K562 (cell line): ENCODE measurements at regions of chr3 and their contacts with region 1.

Region 1: DNA sequence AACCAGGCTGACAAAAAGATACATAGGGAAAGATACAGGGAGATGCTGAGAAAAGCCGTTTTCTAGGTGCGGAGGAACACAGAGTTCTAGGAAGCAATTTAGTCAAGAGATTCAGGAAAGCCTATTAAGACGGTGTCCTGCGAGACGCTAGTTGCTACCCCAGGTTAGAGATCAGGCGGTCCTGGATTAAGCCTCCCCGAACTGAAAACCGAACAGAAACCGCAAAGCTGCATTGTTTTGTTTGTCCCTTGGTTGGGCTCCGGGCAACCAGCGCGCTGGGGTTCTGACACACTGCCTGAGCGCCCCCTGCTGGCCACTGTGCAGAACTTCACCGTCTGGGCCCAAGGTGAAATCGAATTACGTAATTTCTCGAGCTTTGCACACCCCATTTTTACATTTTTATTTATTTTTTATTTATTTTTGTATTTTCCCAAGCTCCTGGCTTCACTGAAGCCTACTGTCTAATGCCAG is 37.3 kb upstream of the NDUFB4 start:
- DNase-seq: peak; percentile 65 to 84 (median 74)
- ATAC-seq: peak; percentile 81
- H3K4me3 ChIP-seq: peak overlapping the region; percentile 35
- H3K27ac ChIP-seq: peak overlapping the region; percentile 71; the same call in 2 of the 3 replicates
- H3K4me1 ChIP-seq: peaks cover 0 to 7% of the 10 kb centered on the region in 2 experiments; a peak in 3 of 5 replicates
- H3K27me3 ChIP-seq: no peaks in the 10 kb centered on the region; a peak in 1 of 5 replicates
- CTCF ChIP-seq: peak; percentile 78 to 87 (median 86)
- EP300 ChIP-seq: no peak
- POLR2A ChIP-seq: no peak
- RAD21 ChIP-seq: peak; percentile 79 to 82

Region 2: GRCh38 chr3:120239644-120240043 is 319.2 kb before region 1 on chr3:
- CTCF ChIA-PET with region 1: interaction called, 8 read pairs
- POLR2A ChIA-PET with region 1: no interaction called
- in situ Hi-C with region 1: loop called (anchors 5 kb)
- intact Hi-C with region 1: loop called (anchors 1 kb)
- DNase-seq: no peak
- ATAC-seq: no peak
- H3K4me3 ChIP-seq: no peak overlapping the region
- H3K27ac ChIP-seq: no peak overlapping the region
- H3K4me1 ChIP-seq: no peaks in the 10 kb centered on the region
- H3K27me3 ChIP-seq: peaks cover 0 to 4% of the 10 kb centered on the region in 2 experiments; a peak in 1 of 5 replicates
- CTCF ChIP-seq: no peak
- EP300 ChIP-seq: no peak
- POLR2A ChIP-seq: no peak
- RAD21 ChIP-seq: no peak

Region 3: GRCh38 chr3:120417272-120417911 is 141.4 kb before region 1 on chr3:
- CTCF ChIA-PET with region 1: interaction called, 4 read pairs
- POLR2A ChIA-PET with region 1: interaction called, 3 read pairs
- in situ Hi-C with region 1: no loop called
- intact Hi-C with region 1: loop called (anchors 1 kb)
- DNase-seq: peak; percentile 81 to 87 (median 85)
- ATAC-seq: peak; percentile 99
- H3K4me3 ChIP-seq: no peak overlapping the region
- H3K27ac ChIP-seq: no peak overlapping the region
- H3K4me1 ChIP-seq: no peaks in the 10 kb centered on the region
- H3K27me3 ChIP-seq: no peaks in the 10 kb centered on the region
- CTCF ChIP-seq: peak; percentile 56 to 81 (median 79)
- EP300 ChIP-seq: no peak
- POLR2A ChIP-seq: no peak
- RAD21 ChIP-seq: peak; percentile 69 to 78

Region 4: DNA sequence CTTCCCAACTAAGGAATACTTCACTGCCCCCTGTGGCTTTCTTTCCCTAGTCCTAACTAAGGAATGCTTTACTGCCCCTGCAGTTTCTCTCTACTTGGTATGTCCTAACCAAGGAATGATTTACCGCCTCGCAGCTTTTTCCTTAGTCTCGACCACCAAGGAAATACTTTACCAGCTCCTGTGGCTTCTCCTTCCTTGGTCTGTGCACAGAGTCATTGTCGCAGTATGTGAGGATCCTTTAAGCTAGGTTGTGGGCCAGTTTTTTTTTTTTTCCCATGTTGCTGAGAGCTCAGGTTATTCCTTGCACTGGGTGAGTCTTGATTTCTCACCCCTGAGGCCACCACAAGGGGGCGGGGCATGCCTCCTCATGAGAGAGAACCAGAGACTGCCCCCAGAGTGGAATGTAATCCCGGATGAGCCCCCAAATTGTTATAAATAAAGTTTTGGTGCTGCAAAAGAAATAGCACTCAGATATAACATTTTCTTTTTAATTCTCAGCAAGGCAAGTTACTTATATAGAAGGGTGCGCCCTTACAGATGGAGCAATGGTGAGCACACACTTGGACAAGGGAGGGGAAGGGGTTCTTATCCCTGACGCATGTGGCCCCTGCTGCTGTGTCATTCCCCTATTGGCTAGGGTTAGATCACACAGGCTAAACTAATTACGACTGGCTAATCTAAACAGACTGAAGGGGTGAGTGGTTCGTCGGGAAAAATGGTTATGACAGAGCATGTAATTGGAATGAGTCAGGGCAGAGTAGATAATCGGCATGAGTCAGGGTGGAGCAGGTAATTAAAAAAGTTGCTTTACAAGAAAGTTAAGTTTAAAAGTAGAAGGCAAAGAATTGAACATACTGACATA is 64.3 kb after region 1 on chr3:
- CTCF ChIA-PET with region 1: interaction called, 4 read pairs
- POLR2A ChIA-PET with region 1: no interaction called
- in situ Hi-C with region 1: no loop called
- intact Hi-C with region 1: loop called (anchors 1 kb)
- DNase-seq: peak; percentile 25 to 77 (median 44)
- ATAC-seq: peak; percentile 92
- H3K4me3 ChIP-seq: no peak overlapping the region
- H3K27ac ChIP-seq: peak overlapping the region; percentile 70; the same call in 2 of the 3 replicates
- H3K4me1 ChIP-seq: peaks cover 0 to 9% of the 10 kb centered on the region in 2 experiments; a peak in 3 of 5 replicates
- H3K27me3 ChIP-seq: no peaks in the 10 kb centered on the region
- CTCF ChIP-seq: peak; percentile 57 to 65 (median 60)
- EP300 ChIP-seq: no peak; the same call in 1 of the 2 replicates
- POLR2A ChIP-seq: no peak
- RAD21 ChIP-seq: peak; percentile 69 to 73